Brain microvascular endothelial cell (primary cell): ENCODE measurements at regions of chr12 and their contacts with region 1.

Region 1: GRCh38 chr12:110289044-110289710 is 8.1 kb downstream of the ATP2A2 start:
- DNase-seq: no peak
- H3K4me3 ChIP-seq: no peak overlapping the region
- H3K27ac ChIP-seq: no peak overlapping the region
- H3K27me3 ChIP-seq: no peaks in the 10 kb centered on the region
- CTCF ChIP-seq: no peak

Region 2: DNA sequence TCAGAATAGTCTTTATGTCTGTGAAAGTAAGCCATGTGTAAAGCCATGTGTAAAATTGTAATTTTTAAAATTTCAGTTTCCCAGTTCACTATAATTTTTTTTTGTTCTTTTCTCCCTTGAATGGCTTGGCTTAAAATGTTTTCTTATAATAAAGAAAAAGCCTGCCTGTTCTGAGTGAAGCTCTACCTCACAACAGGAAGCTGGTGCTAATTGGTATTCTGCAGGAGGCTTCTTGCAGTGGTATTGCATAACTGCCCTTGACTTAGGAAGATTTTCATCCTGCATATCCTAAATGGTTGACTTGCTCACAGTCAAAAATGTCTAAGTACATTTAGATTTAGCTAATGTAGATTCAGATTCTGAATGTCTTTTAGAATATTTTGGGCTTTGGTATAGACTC is 41.4 kb after region 1 on chr12:
- in situ Hi-C with region 1: loop called (anchors 5 kb)
- DNase-seq: no peak
- H3K4me3 ChIP-seq: no peak overlapping the region
- H3K27ac ChIP-seq: no peak overlapping the region
- H3K27me3 ChIP-seq: no peaks in the 10 kb centered on the region
- CTCF ChIP-seq: no peak